CD4-positive, alpha-beta T cell (primary cell): ENCODE measurements at regions of chr19 and their contacts with region 1.

Region 1: GRCh38 chr19:49487277-49488045 is at the start of gene RPL13A:
- DNase-seq: peak; percentile 98 to 100 (median 99)
- ATAC-seq: peak; percentile 86
- H3K4me3 ChIP-seq: peak within 1 kb of the TSS; percentile 77
- H3K4me3 Mint-ChIP-seq: peak within 1 kb of the TSS; percentile 91
- H3K27ac ChIP-seq: peak within 1 kb of the TSS; percentile 60 to 81
- H3K27ac Mint-ChIP-seq: peak within 1 kb of the TSS; percentile 92
- H3K4me1 ChIP-seq: peaks cover 64% of the 10 kb centered on the region
- H3K4me1 Mint-ChIP-seq: peaks cover 55% of the 10 kb centered on the region
- H3K27me3 ChIP-seq: no peaks in the 10 kb centered on the region
- H3K27me3 Mint-ChIP-seq: no peaks in the 10 kb centered on the region
- CTCF ChIP-seq: no peak
- total RNA-seq, gene RPL13A: 5,328 to 5,481 TPM

Region 2: DNA sequence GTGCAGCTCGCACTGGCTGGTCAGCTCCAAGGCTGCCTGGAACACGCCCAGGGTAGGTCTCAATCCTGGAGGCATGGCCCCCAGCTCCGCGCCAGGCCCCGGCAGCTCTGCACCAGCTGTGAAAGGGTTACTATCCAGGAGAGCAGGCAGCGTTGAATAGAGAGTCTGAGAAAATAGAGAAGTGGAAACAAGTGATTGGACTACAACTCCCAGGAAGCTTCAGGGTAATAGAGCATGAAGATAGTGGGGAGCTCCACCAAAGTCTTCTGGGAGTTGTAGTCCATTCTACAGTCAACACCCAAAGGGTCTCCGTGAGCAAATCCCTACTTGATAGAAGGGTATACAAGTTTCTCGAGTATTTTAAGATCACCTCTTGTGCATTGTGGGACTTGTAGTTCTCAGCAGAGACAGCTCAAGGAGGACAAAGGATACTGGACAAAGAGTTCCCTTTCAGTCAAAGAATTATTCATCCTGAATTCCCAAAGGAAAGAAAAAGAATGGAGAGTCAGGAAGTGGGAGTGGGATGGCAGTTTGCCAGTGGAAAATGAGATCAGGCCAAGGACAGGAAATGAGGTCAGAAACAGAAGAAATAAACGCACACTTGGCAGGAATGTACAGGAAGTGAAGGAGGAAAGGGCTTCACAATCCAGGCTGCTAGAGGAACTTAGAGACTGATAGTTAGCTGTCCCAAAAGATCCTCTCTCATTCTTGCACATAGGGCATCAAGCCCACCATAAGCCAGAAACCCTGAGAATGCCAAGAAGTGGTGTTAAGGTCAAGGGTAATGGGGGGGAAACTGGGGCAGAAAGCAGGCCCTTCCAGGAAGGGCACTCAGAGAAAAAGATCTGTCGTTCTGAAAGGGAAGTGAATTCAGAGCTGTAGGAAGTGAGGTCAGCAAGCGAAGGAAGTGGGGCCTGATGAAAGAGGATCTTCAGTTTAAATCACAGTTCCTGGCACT is 762.4 kb before region 1 on chr19:
- CTCF ChIA-PET with region 1: no interaction called
- POLR2A ChIA-PET with region 1: no interaction called
- intact Hi-C with region 1: no loop called
- DNase-seq: peak in 4 of 14 experiments; percentile 30 to 82 (median 74)
- ATAC-seq: peak; percentile 50
- H3K4me3 ChIP-seq: no peak overlapping the region
- H3K4me3 Mint-ChIP-seq: peak overlapping the region; percentile 58
- H3K27ac ChIP-seq: peak overlapping the region; percentile 40 to 50
- H3K27ac Mint-ChIP-seq: peak overlapping the region; percentile 80
- H3K4me1 ChIP-seq: peaks cover 46% of the 10 kb centered on the region
- H3K4me1 Mint-ChIP-seq: peaks cover 31% of the 10 kb centered on the region
- H3K27me3 ChIP-seq: no peaks in the 10 kb centered on the region
- H3K27me3 Mint-ChIP-seq: no peaks in the 10 kb centered on the region
- CTCF ChIP-seq: no peak

Region 3: DNA sequence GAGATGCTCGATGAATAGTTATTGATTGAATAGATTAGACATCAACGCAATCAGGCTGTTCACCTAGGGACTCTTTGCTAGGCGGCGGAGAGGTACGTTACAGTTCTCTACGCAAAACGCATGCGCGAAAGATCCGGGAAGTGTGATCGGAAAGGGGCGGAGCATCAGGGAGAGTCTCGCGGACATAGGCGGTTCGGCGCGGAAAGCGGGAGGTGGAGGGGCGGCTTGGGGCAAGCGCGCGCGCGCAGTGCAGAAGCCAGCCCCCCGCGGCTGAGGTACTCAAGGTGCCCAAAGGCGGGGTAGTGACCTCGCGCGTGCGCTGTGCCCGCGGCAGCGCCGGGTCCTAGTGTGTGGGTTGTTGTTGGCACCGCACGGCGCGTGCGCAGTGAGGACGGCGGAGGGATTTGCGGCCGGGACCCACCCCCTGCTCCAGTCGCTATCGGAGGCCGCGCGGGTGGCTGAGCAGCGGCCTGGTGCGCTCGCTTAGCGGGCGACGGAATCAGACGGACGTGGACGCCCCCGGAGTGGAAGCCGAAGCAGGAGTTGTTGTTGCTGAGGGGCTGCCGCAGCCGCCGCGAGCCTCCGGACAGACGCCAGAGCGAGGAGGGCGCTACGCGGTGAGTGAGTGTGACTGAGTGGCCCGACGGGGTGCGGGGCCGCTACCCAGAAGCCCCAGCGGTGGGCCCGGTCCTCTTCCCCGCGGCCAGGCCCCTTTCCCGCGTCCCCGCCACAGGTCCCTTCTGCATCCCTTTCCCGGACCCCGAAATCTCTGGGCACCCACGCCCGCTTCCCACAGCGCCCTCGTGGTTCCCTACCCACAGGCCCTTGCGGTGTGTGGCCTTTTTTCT is 402.2 kb before region 1 on chr19 and contains the start of gene SNRNP70:
- CTCF ChIA-PET with region 1: no interaction called
- POLR2A ChIA-PET with region 1: no interaction called
- intact Hi-C with region 1: loop called in 1 of 2 experiments (anchors 10 kb)
- DNase-seq: peak; percentile 96 to 100 (median 99)
- ATAC-seq: peak; percentile 92
- H3K4me3 ChIP-seq: peak within 1 kb of the TSS; percentile 94
- H3K4me3 Mint-ChIP-seq: peak within 1 kb of the TSS; percentile 86
- H3K27ac ChIP-seq: peak within 1 kb of the TSS; percentile 68 to 75
- H3K27ac Mint-ChIP-seq: peak within 1 kb of the TSS; percentile 87
- H3K4me1 ChIP-seq: peaks cover 45% of the 10 kb centered on the region
- H3K4me1 Mint-ChIP-seq: peaks cover 36% of the 10 kb centered on the region
- H3K27me3 ChIP-seq: no peaks in the 10 kb centered on the region
- H3K27me3 Mint-ChIP-seq: peaks cover 5% of the 10 kb centered on the region
- CTCF ChIP-seq: no peak
- total RNA-seq, gene SNRNP70: 375 to 397 TPM

Region 4: DNA sequence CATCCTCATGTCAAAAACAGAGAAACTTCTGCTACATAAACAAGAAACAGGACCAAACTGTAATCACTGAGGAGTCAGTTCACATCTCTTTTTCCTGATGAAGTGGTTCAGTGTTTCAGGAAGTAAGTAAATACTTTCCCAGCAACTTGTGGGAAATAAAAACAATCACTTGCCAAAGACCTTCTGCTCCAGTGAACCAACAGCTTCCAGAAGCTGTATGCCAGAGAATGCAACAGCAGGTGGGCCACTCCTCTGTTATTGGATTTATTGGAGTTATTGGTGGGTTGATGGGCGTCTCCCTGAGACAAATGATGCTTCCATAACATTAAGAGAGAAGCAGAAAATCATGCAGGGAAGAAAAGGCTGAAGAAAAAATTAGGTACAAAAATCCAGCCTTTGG is 172.3 kb before region 1 on chr19:
- CTCF ChIA-PET with region 1: no interaction called
- POLR2A ChIA-PET with region 1: no interaction called
- intact Hi-C with region 1: no loop called
- DNase-seq: no peak
- ATAC-seq: no peak
- H3K4me3 ChIP-seq: no peak overlapping the region
- H3K4me3 Mint-ChIP-seq: no peak overlapping the region
- H3K27ac ChIP-seq: no peak overlapping the region
- H3K27ac Mint-ChIP-seq: no peak overlapping the region
- H3K4me1 ChIP-seq: no peaks in the 10 kb centered on the region
- H3K4me1 Mint-ChIP-seq: peaks cover 19% of the 10 kb centered on the region
- H3K27me3 ChIP-seq: no peaks in the 10 kb centered on the region
- H3K27me3 Mint-ChIP-seq: no peaks in the 10 kb centered on the region
- CTCF ChIP-seq: no peak

Region 5: DNA sequence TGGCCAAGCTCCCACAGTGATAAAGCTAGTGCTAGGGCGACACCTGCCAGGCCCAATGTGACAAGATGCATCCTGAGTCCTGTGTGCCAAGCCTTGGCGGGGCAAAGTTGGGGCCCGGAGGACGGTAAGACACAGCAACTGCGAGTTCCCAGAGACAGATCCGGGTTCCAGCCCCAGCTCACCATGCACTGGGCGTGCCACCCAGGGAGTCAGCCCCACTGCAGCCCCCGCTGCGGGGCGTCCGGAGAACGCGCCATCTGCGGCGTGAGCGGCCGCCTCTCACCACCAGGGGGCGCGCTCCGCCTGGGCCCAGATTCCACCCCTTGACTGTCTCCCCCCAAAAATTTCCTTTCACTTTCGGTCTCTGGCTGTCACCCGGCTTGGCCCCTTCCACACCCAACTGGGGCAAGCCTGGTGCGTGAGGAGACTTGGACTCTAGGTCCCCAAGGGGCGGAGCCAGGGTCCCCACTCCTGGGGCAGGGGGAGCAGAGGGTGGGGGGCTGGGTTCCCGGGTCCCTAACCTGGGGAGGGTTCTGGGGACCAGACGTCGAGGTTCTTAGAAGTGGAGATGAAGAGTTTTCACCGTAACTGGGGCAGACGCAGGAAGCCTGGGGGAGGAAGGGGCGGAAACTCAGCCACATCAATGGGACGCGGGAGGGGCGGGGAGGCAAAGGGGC is 13.5 kb before region 1 on chr19 and contains the start of gene FLT3LG:
- CTCF ChIA-PET with region 1: interaction called, 8 read pairs
- POLR2A ChIA-PET with region 1: interaction called, 24 read pairs
- intact Hi-C with region 1: loop called in 1 of 2 experiments (anchors 2 kb)
- DNase-seq: peak; percentile 85 to 98 (median 90)
- ATAC-seq: peak; percentile 49
- H3K4me3 ChIP-seq: peak within 1 kb of the TSS; percentile 97
- H3K4me3 Mint-ChIP-seq: peak within 1 kb of the TSS; percentile 100
- H3K27ac ChIP-seq: peak within 1 kb of the TSS; percentile 90 to 98
- H3K27ac Mint-ChIP-seq: peak within 1 kb of the TSS; percentile 98
- H3K4me1 ChIP-seq: peaks cover 78% of the 10 kb centered on the region
- H3K4me1 Mint-ChIP-seq: peaks cover 59% of the 10 kb centered on the region
- H3K27me3 ChIP-seq: no peaks in the 10 kb centered on the region
- H3K27me3 Mint-ChIP-seq: no peaks in the 10 kb centered on the region
- CTCF ChIP-seq: peak; percentile 95
- total RNA-seq, gene FLT3LG: 311 to 325 TPM